AG04450 (cell line): ENCODE measurements at regions of chr6 and their contacts with region 1.

Region 1: GRCh38 chr6:119325559-119326265 is 23.8 kb downstream of the MAN1A1 start:
- DNase-seq: no peak
- H3K4me3 ChIP-seq: no peak overlapping the region
- H3K27ac ChIP-seq: no peak overlapping the region
- H3K27me3 ChIP-seq: no peaks in the 10 kb centered on the region
- CTCF ChIP-seq: no peak

Region 2: GRCh38 chr6:119343167-119343566 is 17.5 kb after region 1 on chr6:
- CTCF ChIA-PET with region 1: interaction called, 13 read pairs
- POLR2A ChIA-PET with region 1: no interaction called
- DNase-seq: no peak
- H3K4me3 ChIP-seq: no peak overlapping the region
- H3K27ac ChIP-seq: no peak overlapping the region
- H3K27me3 ChIP-seq: no peaks in the 10 kb centered on the region
- CTCF ChIP-seq: no peak

Region 3: GRCh38 chr6:119395192-119395591 is 69.5 kb after region 1 on chr6:
- CTCF ChIA-PET with region 1: no interaction called
- POLR2A ChIA-PET with region 1: no interaction called
- DNase-seq: no peak
- H3K4me3 ChIP-seq: no peak overlapping the region
- H3K27ac ChIP-seq: no peak overlapping the region
- H3K27me3 ChIP-seq: no peaks in the 10 kb centered on the region
- CTCF ChIP-seq: no peak

Region 4: GRCh38 chr6:119552021-119552420 is 226.3 kb after region 1 on chr6:
- CTCF ChIA-PET with region 1: no interaction called
- POLR2A ChIA-PET with region 1: no interaction called
- DNase-seq: no peak
- H3K4me3 ChIP-seq: no peak overlapping the region
- H3K27ac ChIP-seq: no peak overlapping the region
- H3K27me3 ChIP-seq: no peaks in the 10 kb centered on the region
- CTCF ChIP-seq: no peak